B cell (primary cell): ENCODE measurements at regions of chr3 and their contacts with region 1.

Region 1: GRCh38 chr3:13022348-13023234 is 50.6 kb downstream of the IQSEC1 start:
- DNase-seq: peak; percentile 72
- ATAC-seq: peak; percentile 62
- H3K4me3 ChIP-seq: peak overlapping the region; percentile 81 to 98 (median 88)
- H3K4me3 Mint-ChIP-seq: peak overlapping the region; percentile 100
- H3K27ac ChIP-seq: peak overlapping the region; percentile 96 to 97
- H3K27ac Mint-ChIP-seq: peak overlapping the region; percentile 95
- H3K4me1 ChIP-seq: peaks cover 45 to 55% of the 10 kb centered on the region in 2 donors
- H3K4me1 Mint-ChIP-seq: peaks cover 78% of the 10 kb centered on the region
- H3K27me3 ChIP-seq: no peaks in the 10 kb centered on the region
- H3K27me3 Mint-ChIP-seq: no peaks in the 10 kb centered on the region
- CTCF ChIP-seq: no peak

Region 2: DNA sequence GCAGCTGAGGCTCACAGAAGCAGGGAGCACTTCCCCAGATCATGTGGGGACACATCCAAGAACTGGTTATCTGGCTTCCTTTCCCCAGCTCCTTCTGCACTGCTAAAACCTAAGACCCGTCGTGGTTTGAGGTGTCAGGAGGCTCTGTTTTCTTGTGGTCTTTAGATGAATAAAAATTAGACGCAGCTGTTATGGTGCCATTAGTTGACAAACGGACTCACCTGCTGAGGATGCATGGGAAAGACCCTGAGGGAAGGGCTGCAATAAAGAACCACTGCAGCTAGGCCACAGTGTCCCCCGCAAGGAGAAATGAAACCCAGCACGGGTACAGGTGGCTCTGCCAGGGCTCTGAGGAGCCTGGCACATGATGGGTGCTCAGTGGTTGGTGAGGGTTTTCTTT is 48.8 kb before region 1 on chr3:
- CTCF ChIA-PET with region 1: no interaction called
- POLR2A ChIA-PET with region 1: no interaction called
- intact Hi-C with region 1: no loop called
- DNase-seq: peak; percentile 75
- ATAC-seq: peak; percentile 62
- H3K4me3 ChIP-seq: no peak overlapping the region
- H3K4me3 Mint-ChIP-seq: no peak overlapping the region
- H3K27ac ChIP-seq: peak overlapping the region in 1 of 2 donors; percentile 49
- H3K27ac Mint-ChIP-seq: peak overlapping the region; percentile 76
- H3K4me1 ChIP-seq: peaks cover 22 to 62% of the 10 kb centered on the region in 2 donors
- H3K4me1 Mint-ChIP-seq: peaks cover 72% of the 10 kb centered on the region
- H3K27me3 ChIP-seq: no peaks in the 10 kb centered on the region
- H3K27me3 Mint-ChIP-seq: no peaks in the 10 kb centered on the region
- CTCF ChIP-seq: no peak

Region 3: DNA sequence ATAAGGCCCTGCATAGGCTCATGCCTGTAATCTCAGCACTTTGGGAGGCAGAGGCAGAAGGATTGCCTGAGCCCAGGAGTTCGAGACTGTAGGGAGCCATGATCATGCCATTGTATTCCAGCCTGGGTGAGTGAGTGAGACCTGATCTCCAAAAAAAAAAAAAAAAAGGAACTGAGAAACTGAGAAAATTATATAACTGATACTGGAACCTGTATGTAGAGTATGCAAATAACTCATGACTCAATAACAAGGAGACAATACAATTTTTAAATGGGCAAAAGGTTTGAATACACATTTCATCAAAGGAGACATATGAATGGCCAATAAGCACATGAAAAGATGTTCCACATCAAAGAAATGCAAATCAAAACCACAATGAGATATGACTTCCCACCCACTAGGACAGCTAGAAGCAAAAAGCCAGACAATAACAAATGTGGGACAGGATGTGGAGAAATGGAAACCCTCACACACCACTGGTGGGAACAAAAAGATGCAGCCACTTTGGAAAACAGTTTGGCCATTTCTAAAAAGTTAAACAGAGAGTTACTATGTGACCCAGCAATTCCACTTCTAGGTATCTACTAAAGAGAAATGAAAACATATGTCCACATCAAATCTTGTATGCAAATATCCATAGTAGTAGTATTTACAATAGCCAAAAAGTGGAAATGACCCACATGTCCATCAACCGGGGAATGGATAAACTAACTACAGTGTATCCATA is 20.0 kb before region 1 on chr3:
- CTCF ChIA-PET with region 1: interaction called, 42 read pairs
- POLR2A ChIA-PET with region 1: interaction called, 10 read pairs
- intact Hi-C with region 1: loop called (anchors 1 kb)
- DNase-seq: peak; percentile 84
- ATAC-seq: peak; percentile 65
- H3K4me3 ChIP-seq: peak overlapping the region in 2 of 5 experiments; percentile 5 to 35
- H3K4me3 Mint-ChIP-seq: peak overlapping the region; percentile 73
- H3K27ac ChIP-seq: peak overlapping the region; percentile 77 to 97
- H3K27ac Mint-ChIP-seq: peak overlapping the region; percentile 93
- H3K4me1 ChIP-seq: peaks cover 90 to 95% of the 10 kb centered on the region in 2 donors
- H3K4me1 Mint-ChIP-seq: peaks cover 93% of the 10 kb centered on the region
- H3K27me3 ChIP-seq: no peaks in the 10 kb centered on the region
- H3K27me3 Mint-ChIP-seq: no peaks in the 10 kb centered on the region
- CTCF ChIP-seq: no peak

Region 4: GRCh38 chr3:13012228-13012691 is 10.3 kb before region 1 on chr3:
- CTCF ChIA-PET with region 1: interaction called, 41 read pairs
- POLR2A ChIA-PET with region 1: interaction called, 29 read pairs
- intact Hi-C with region 1: loop called (anchors 1 kb)
- DNase-seq: peak; percentile 88
- ATAC-seq: peak; percentile 31
- H3K4me3 ChIP-seq: peak overlapping the region in 2 of 5 experiments; percentile 3 to 6
- H3K4me3 Mint-ChIP-seq: peak overlapping the region; percentile 86
- H3K27ac ChIP-seq: peak overlapping the region; percentile 96 to 97
- H3K27ac Mint-ChIP-seq: peak overlapping the region; percentile 95
- H3K4me1 ChIP-seq: peaks cover 98 to 100% of the 10 kb centered on the region in 2 donors
- H3K4me1 Mint-ChIP-seq: peaks cover 95% of the 10 kb centered on the region
- H3K27me3 ChIP-seq: no peaks in the 10 kb centered on the region
- H3K27me3 Mint-ChIP-seq: no peaks in the 10 kb centered on the region
- CTCF ChIP-seq: no peak

Region 5: GRCh38 chr3:13045904-13046568 is 23.4 kb after region 1 on chr3:
- CTCF ChIA-PET with region 1: interaction called, 32 read pairs
- POLR2A ChIA-PET with region 1: interaction called, 17 read pairs
- intact Hi-C with region 1: loop called (anchors 1 kb)
- DNase-seq: peak; percentile 90
- ATAC-seq: peak; percentile 92
- H3K4me3 ChIP-seq: peak overlapping the region in 2 of 5 experiments; percentile 26 to 42
- H3K4me3 Mint-ChIP-seq: peak overlapping the region; percentile 90
- H3K27ac ChIP-seq: peak overlapping the region; percentile 89
- H3K27ac Mint-ChIP-seq: peak overlapping the region; percentile 87
- H3K4me1 ChIP-seq: peaks cover 63 to 71% of the 10 kb centered on the region in 2 donors
- H3K4me1 Mint-ChIP-seq: peaks cover 70% of the 10 kb centered on the region
- H3K27me3 ChIP-seq: no peaks in the 10 kb centered on the region
- H3K27me3 Mint-ChIP-seq: no peaks in the 10 kb centered on the region
- CTCF ChIP-seq: no peak